ENCODE measurements at regions of chr5 and their contacts with region 1.

Region 1: GRCh38 chr5:177454397-177455035 is 7.9 kb downstream of the PRR7 start:
- DNase-seq: peak; percentile 88
- H3K4me3 ChIP-seq: peak overlapping the region; percentile 62
- H3K27ac ChIP-seq: peak overlapping the region; percentile 81
- H3K4me1 ChIP-seq: peaks cover 13% of the 10 kb centered on the region
- H3K27me3 ChIP-seq: no peaks in the 10 kb centered on the region
- CTCF ChIP-seq: peak; percentile 60

Region 2: GRCh38 chr5:177290816-177291596 is 163.5 kb before region 1 on chr5:
- CTCF ChIA-PET with region 1: no interaction called
- POLR2A ChIA-PET with region 1: no interaction called
- intact Hi-C with region 1: no loop called
- DNase-seq: no peak
- H3K4me3 ChIP-seq: no peak overlapping the region
- H3K27ac ChIP-seq: no peak overlapping the region
- H3K4me1 ChIP-seq: no peaks in the 10 kb centered on the region
- H3K27me3 ChIP-seq: no peaks in the 10 kb centered on the region
- CTCF ChIP-seq: no peak

Region 3: DNA sequence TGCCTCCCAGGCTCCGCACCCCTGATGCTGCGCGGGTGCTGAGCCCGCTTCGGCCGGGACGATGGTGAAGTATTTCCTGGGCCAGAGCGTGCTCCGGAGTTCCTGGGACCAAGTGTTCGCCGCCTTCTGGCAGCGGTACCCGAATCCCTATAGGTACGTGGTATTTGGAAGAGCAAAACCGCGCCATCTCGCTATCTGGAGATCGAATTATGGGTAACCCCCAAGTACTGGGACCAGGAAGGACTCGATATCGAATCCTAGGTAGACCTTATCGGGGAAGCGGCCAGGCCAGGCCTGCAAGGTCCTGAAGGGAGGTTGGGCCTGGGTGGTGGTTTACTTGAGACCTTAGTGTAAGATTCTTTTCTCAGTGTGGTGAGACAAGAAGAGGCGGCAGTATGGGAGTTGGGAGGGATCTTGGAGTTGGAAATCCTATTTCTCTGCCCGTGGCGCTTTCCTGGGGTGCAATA is 150.6 kb before region 1 on chr5:
- CTCF ChIA-PET with region 1: no interaction called
- POLR2A ChIA-PET with region 1: no interaction called
- intact Hi-C with region 1: loop called (anchors 2 kb)
- DNase-seq: no peak
- H3K4me3 ChIP-seq: peak overlapping the region; percentile 88
- H3K27ac ChIP-seq: peak overlapping the region; percentile 87
- H3K4me1 ChIP-seq: peaks cover 10% of the 10 kb centered on the region
- H3K27me3 ChIP-seq: no peaks in the 10 kb centered on the region
- CTCF ChIP-seq: no peak

Region 4: GRCh38 chr5:177362610-177363507 is 91.7 kb before region 1 on chr5:
- CTCF ChIA-PET with region 1: no interaction called
- POLR2A ChIA-PET with region 1: no interaction called
- intact Hi-C with region 1: no loop called
- DNase-seq: peak; percentile 61
- H3K4me3 ChIP-seq: peak overlapping the region; percentile 35
- H3K27ac ChIP-seq: no peak overlapping the region
- H3K4me1 ChIP-seq: peaks cover 20% of the 10 kb centered on the region
- H3K27me3 ChIP-seq: no peaks in the 10 kb centered on the region
- CTCF ChIP-seq: no peak

Region 5: GRCh38 chr5:177390363-177391300 is 63.9 kb before region 1 on chr5:
- CTCF ChIA-PET with region 1: interaction called, 33 read pairs
- POLR2A ChIA-PET with region 1: no interaction called
- intact Hi-C with region 1: loop called (anchors 1 kb)
- DNase-seq: peak; percentile 86
- H3K4me3 ChIP-seq: no peak overlapping the region
- H3K27ac ChIP-seq: no peak overlapping the region
- H3K4me1 ChIP-seq: peaks cover 4% of the 10 kb centered on the region
- H3K27me3 ChIP-seq: no peaks in the 10 kb centered on the region
- CTCF ChIP-seq: peak; percentile 85

Region 6: GRCh38 chr5:177620560-177620959 is 166.0 kb after region 1 on chr5:
- CTCF ChIA-PET with region 1: no interaction called
- POLR2A ChIA-PET with region 1: no interaction called
- intact Hi-C with region 1: no loop called
- DNase-seq: no peak
- H3K4me3 ChIP-seq: no peak overlapping the region
- H3K27ac ChIP-seq: no peak overlapping the region
- H3K4me1 ChIP-seq: no peaks in the 10 kb centered on the region
- H3K27me3 ChIP-seq: no peaks in the 10 kb centered on the region
- CTCF ChIP-seq: no peak

Region 7: DNA sequence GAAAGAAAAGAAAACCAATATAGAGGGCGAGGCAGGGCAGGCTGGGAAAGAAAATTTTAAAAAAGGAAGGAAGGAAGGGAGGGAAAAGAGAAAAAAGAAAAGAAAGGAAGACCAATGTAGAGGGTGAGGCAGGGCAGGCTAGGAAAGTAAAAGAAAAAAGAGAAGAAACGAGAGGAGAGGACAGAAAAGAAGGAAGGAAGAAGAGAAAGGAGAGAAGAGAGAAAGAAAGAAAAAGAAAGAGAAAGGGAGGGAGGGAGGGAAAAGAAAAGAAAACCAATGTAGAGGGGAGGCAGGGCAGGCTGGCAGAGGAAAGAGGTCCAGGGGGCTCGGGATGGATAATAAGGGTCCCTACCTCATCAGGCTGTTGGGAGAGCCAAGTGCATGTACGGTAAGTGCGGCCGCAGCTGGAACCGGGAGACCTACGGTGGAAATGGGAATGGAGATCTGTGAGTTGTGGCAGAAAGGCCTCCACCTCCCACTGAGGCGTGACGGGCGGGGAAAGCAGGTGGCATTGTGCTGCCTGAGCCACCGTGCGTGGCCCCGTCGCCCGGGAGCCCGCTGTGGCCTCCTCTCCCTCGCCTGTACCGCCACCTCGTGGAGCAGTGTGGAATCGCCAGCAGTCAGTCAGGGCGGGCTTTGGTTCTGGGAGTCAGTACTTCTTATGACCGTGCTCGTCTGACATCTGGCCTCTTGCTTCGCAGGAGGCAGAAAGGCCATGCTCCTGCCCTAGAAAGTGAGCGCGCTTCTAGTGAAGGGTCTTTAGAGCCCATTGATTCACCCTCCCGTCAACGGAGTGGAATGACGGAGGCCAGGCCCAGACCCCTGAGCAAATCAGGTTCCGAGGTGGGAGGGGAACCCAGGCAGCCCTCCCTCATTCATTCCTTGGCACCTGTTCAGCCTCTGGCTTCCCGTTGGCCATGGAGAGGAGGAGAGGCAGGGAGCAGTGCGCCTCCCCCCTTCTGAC is 709.5 kb after region 1 on chr5:
- CTCF ChIA-PET with region 1: no interaction called
- POLR2A ChIA-PET with region 1: no interaction called
- intact Hi-C with region 1: no loop called
- DNase-seq: peak; percentile 84
- H3K4me3 ChIP-seq: peak overlapping the region; percentile 25
- H3K27ac ChIP-seq: no peak overlapping the region
- H3K4me1 ChIP-seq: no peaks in the 10 kb centered on the region
- H3K27me3 ChIP-seq: no peaks in the 10 kb centered on the region
- CTCF ChIP-seq: peak; percentile 93